ENCODE measurements at regions of chr16 and their contacts with region 1.

Region 1: GRCh38 chr16:11312718-11313492 is 31.8 kb upstream of the PRM1 start:
- H3K4me3 Mint-ChIP-seq: no peak overlapping the region
- H3K27ac Mint-ChIP-seq: peak overlapping the region; percentile 83
- H3K4me1 Mint-ChIP-seq: peaks cover 76% of the 10 kb centered on the region
- H3K27me3 Mint-ChIP-seq: peaks cover 40% of the 10 kb centered on the region

Region 2: GRCh38 chr16:11327277-11328171 is 14.6 kb after region 1 on chr16:
- intact Hi-C with region 1: loop called (anchors 2 kb)
- H3K4me3 Mint-ChIP-seq: peak overlapping the region; percentile 50
- H3K27ac Mint-ChIP-seq: peak overlapping the region; percentile 94
- H3K4me1 Mint-ChIP-seq: peaks cover 65% of the 10 kb centered on the region
- H3K27me3 Mint-ChIP-seq: peaks cover 25% of the 10 kb centered on the region

Region 3: DNA sequence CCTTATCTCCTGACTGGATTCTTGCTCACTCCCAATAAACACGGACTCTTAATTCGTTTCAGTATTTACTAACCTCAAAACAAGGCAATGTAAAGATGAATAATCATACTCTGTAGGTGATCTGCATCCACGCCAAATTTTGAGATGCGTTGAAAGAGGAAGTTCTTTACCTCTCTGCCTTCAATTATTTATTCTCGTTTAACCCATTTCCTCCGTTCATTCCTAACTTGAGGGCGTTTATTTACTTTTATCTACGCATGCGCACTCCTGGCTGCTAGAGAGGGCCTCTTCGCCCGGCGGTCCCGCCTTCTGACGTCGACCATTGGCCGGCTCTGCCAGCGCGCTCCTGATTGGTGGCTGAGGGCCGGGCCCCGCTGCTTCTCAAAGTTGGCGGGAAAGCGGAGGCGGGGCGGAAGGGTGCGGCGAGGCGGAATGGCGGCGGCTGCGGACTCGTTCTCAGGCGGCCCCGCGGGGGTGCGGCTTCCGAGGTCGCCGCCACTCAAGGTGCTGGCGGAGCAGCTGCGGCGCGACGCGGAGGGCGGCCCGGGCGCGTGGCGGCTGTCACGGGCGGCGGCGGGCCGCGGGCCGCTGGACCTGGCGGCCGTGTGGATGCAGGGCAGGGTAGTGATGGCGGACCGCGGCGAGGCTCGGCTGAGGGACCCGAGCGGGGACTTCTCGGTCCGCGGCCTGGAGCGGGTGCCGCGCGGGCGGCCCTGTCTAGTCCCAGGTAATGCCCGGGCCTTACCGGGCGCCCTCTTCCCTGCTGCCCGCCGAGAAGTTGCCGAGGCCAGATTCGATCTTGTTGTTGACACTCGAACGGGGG is 32.3 kb after region 1 on chr16 and contains the start of gene RMI2:
- intact Hi-C with region 1: loop called (anchors 5 kb)
- H3K4me3 Mint-ChIP-seq: peak within 1 kb of the TSS; percentile 80
- H3K27ac Mint-ChIP-seq: peak within 1 kb of the TSS; percentile 78
- H3K4me1 Mint-ChIP-seq: peaks cover 47% of the 10 kb centered on the region
- H3K27me3 Mint-ChIP-seq: peaks cover 6% of the 10 kb centered on the region